ENCODE measurements at regions of chr3 and their contacts with region 1.

Region 1: DNA sequence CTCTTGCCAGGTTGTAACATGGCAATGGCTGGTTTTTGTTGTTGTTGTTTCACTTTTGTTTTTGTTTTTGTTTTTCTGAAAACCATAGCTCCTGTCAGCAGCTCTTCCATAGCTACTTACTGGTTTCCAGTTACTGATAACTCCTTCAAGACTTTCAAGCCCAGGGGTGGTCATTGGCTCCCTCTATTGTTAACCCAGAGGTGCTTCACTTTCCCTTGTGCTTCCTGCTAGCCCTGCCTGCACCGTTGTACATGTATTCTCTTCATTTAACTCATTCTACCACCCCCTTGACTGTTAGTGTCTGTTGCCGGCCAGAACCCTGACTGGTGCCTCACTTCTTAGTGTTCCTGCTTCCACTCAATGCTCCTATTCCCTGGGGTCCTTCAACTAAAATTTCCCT is 4.2 kb upstream of the TRAT1 start:
- DNase-seq: peak; percentile 88
- H3K4me3 Mint-ChIP-seq: peak overlapping the region; percentile 60
- H3K27ac Mint-ChIP-seq: peak overlapping the region; percentile 68
- H3K4me1 Mint-ChIP-seq: peaks cover 28% of the 10 kb centered on the region
- H3K27me3 Mint-ChIP-seq: no peaks in the 10 kb centered on the region

Region 2: GRCh38 chr3:108130701-108131474 is 687.5 kb before region 1 on chr3:
- intact Hi-C with region 1: loop called (anchors 5 kb)
- DNase-seq: no peak
- H3K4me3 Mint-ChIP-seq: peak overlapping the region; percentile 57
- H3K27ac Mint-ChIP-seq: peak overlapping the region; percentile 78
- H3K4me1 Mint-ChIP-seq: peaks cover 81% of the 10 kb centered on the region
- H3K27me3 Mint-ChIP-seq: no peaks in the 10 kb centered on the region

Region 3: GRCh38 chr3:108552267-108553159 is 265.9 kb before region 1 on chr3:
- intact Hi-C with region 1: loop called (anchors 1 kb)
- DNase-seq: peak; percentile 68
- H3K4me3 Mint-ChIP-seq: no peak overlapping the region
- H3K27ac Mint-ChIP-seq: no peak overlapping the region
- H3K4me1 Mint-ChIP-seq: peaks cover 9% of the 10 kb centered on the region
- H3K27me3 Mint-ChIP-seq: no peaks in the 10 kb centered on the region

Region 4: GRCh38 chr3:108662130-108662738 is 156.2 kb before region 1 on chr3:
- intact Hi-C with region 1: loop called (anchors 1 kb)
- DNase-seq: peak; percentile 86
- H3K4me3 Mint-ChIP-seq: no peak overlapping the region
- H3K27ac Mint-ChIP-seq: no peak overlapping the region
- H3K4me1 Mint-ChIP-seq: peaks cover 8% of the 10 kb centered on the region
- H3K27me3 Mint-ChIP-seq: peaks cover 2% of the 10 kb centered on the region

Region 5: DNA sequence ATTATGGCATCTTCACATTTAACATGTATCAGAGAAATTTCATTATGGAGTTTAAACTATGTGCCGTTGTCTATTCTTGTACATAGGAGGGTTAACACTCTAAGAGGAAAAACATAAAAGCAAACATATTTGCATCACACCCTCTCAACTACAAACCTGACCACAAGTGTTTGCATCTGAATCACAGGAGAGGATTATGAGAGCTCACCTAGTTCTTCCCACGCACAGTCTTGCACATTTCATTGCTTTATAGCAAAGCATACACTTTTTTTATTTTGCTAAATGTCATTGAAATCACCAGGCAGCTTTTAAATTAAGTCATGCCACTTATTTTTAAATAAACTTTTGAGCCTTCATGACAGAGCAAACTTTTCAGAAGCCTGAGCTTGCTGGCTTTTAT is 16.7 kb after region 1 on chr3:
- intact Hi-C with region 1: loop called (anchors 1 kb)
- DNase-seq: peak; percentile 86
- H3K4me3 Mint-ChIP-seq: peak overlapping the region; percentile 90
- H3K27ac Mint-ChIP-seq: peak overlapping the region; percentile 98
- H3K4me1 Mint-ChIP-seq: peaks cover 70% of the 10 kb centered on the region
- H3K27me3 Mint-ChIP-seq: no peaks in the 10 kb centered on the region

Region 6: GRCh38 chr3:108914774-108915641 is 96.6 kb after region 1 on chr3:
- intact Hi-C with region 1: loop called (anchors 1 kb)
- DNase-seq: peak; percentile 91
- H3K4me3 Mint-ChIP-seq: peak overlapping the region; percentile 50
- H3K27ac Mint-ChIP-seq: peak overlapping the region; percentile 45
- H3K4me1 Mint-ChIP-seq: peaks cover 14% of the 10 kb centered on the region
- H3K27me3 Mint-ChIP-seq: peaks cover 26% of the 10 kb centered on the region

Measured in activated CD4-positive, alpha-beta T cell treated with anti-CD3 and anti-CD28 coated beads, Interleukin-2, amount 10 ng/mL, durations not matched to agents 24 days and 14 days (primary cell).